SK-N-SH (cell line): ENCODE measurements at regions of chr1 and their contacts with region 1.

Region 1: GRCh38 chr1:17922833-17923232 is 167.7 kb downstream of the ACTL8 start:
- DNase-seq: peak; percentile 71
- H3K4me3 ChIP-seq: no peak overlapping the region; a peak in 1 of 4 replicates
- H3K27ac ChIP-seq: no peak overlapping the region
- H3K4me1 ChIP-seq: peaks cover 0 to 2% of the 10 kb centered on the region in 2 experiments; a peak in 1 of 4 replicates
- H3K27me3 ChIP-seq: no peaks in the 10 kb centered on the region
- CTCF ChIP-seq: peak; percentile 58
- EP300 ChIP-seq: no peak
- RAD21 ChIP-seq: peak; percentile 94

Region 2: GRCh38 chr1:17909634-17910033 is 13.2 kb before region 1 on chr1:
- CTCF ChIA-PET with region 1: interaction called, 30 read pairs
- POLR2A ChIA-PET with region 1: no interaction called
- DNase-seq: no peak
- H3K4me3 ChIP-seq: no peak overlapping the region
- H3K27ac ChIP-seq: no peak overlapping the region
- H3K4me1 ChIP-seq: no peaks in the 10 kb centered on the region; a peak in 1 of 4 replicates
- H3K27me3 ChIP-seq: no peaks in the 10 kb centered on the region
- CTCF ChIP-seq: peak; percentile 42
- EP300 ChIP-seq: no peak
- RAD21 ChIP-seq: peak; percentile 67

Region 3: GRCh38 chr1:18010945-18011344 is 88.1 kb after region 1 on chr1:
- CTCF ChIA-PET with region 1: no interaction called
- POLR2A ChIA-PET with region 1: no interaction called
- DNase-seq: no peak
- H3K4me3 ChIP-seq: no peak overlapping the region
- H3K27ac ChIP-seq: no peak overlapping the region
- H3K4me1 ChIP-seq: peaks cover 0 to 2% of the 10 kb centered on the region in 2 experiments; a peak in 1 of 4 replicates
- H3K27me3 ChIP-seq: no peaks in the 10 kb centered on the region
- CTCF ChIP-seq: no peak
- EP300 ChIP-seq: no peak
- RAD21 ChIP-seq: no peak

Region 4: GRCh38 chr1:18091660-18092446 is 169.0 kb after region 1 on chr1:
- CTCF ChIA-PET with region 1: interaction called, 131 read pairs
- POLR2A ChIA-PET with region 1: no interaction called
- DNase-seq: no peak
- H3K4me3 ChIP-seq: no peak overlapping the region
- H3K27ac ChIP-seq: no peak overlapping the region
- H3K4me1 ChIP-seq: peaks cover 5 to 20% of the 10 kb centered on the region in 2 experiments; a peak in 2 of 4 replicates
- H3K27me3 ChIP-seq: no peaks in the 10 kb centered on the region
- CTCF ChIP-seq: no peak
- EP300 ChIP-seq: no peak
- RAD21 ChIP-seq: no peak

Region 5: GRCh38 chr1:18109756-18110597 is 187.1 kb after region 1 on chr1:
- CTCF ChIA-PET with region 1: interaction called, 28 read pairs
- POLR2A ChIA-PET with region 1: no interaction called
- DNase-seq: peak; percentile 80
- H3K4me3 ChIP-seq: peak overlapping the region; percentile 24 to 41; a peak in 2 of 4 replicates
- H3K27ac ChIP-seq: no peak overlapping the region
- H3K4me1 ChIP-seq: peaks cover 0 to 25% of the 10 kb centered on the region in 2 experiments; a peak in 1 of 4 replicates
- H3K27me3 ChIP-seq: peaks cover 20% of the 10 kb centered on the region; the same call in 1 of the 2 replicates
- CTCF ChIP-seq: no peak
- EP300 ChIP-seq: no peak
- RAD21 ChIP-seq: peak; percentile 14; the same call in 1 of the 2 replicates

Region 6: GRCh38 chr1:18511149-18511873 is 588.5 kb after region 1 on chr1:
- CTCF ChIA-PET with region 1: interaction called, 12 read pairs
- POLR2A ChIA-PET with region 1: no interaction called
- DNase-seq: peak; percentile 49
- H3K4me3 ChIP-seq: no peak overlapping the region
- H3K27ac ChIP-seq: no peak overlapping the region
- H3K4me1 ChIP-seq: peaks cover 0 to 7% of the 10 kb centered on the region in 2 experiments; a peak in 1 of 4 replicates
- H3K27me3 ChIP-seq: no peaks in the 10 kb centered on the region
- CTCF ChIP-seq: no peak
- EP300 ChIP-seq: no peak
- RAD21 ChIP-seq: peak; percentile 58